ENCODE measurements at regions of chr12 and their contacts with region 1.

Region 1: DNA sequence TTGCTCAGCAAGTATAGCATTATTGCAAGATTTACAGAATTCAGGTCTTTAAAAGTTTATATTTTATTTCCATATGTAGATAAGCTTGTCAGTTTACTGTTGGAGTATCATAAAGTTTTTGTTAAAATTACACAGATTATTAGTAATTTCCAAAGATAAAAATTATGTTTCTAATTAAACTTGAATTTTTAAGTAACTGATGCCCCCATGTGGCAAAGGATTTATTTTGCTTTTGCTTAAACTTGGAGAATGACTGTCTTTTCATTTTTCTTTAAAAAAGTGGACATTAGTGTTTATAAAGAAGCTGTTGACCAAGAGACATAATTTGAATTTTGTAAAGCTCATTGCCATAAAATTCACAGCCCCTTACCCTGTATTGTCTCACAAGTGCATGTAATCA is 45.8 kb downstream of the ETNK1 start:
- DNase-seq: no peak
- ATAC-seq: no peak
- H3K4me3 Mint-ChIP-seq: no peak overlapping the region
- H3K27ac Mint-ChIP-seq: no peak overlapping the region
- H3K4me1 Mint-ChIP-seq: no peaks in the 10 kb centered on the region
- H3K27me3 Mint-ChIP-seq: no peaks in the 10 kb centered on the region
- CTCF ChIP-seq: no peak

Region 2: DNA sequence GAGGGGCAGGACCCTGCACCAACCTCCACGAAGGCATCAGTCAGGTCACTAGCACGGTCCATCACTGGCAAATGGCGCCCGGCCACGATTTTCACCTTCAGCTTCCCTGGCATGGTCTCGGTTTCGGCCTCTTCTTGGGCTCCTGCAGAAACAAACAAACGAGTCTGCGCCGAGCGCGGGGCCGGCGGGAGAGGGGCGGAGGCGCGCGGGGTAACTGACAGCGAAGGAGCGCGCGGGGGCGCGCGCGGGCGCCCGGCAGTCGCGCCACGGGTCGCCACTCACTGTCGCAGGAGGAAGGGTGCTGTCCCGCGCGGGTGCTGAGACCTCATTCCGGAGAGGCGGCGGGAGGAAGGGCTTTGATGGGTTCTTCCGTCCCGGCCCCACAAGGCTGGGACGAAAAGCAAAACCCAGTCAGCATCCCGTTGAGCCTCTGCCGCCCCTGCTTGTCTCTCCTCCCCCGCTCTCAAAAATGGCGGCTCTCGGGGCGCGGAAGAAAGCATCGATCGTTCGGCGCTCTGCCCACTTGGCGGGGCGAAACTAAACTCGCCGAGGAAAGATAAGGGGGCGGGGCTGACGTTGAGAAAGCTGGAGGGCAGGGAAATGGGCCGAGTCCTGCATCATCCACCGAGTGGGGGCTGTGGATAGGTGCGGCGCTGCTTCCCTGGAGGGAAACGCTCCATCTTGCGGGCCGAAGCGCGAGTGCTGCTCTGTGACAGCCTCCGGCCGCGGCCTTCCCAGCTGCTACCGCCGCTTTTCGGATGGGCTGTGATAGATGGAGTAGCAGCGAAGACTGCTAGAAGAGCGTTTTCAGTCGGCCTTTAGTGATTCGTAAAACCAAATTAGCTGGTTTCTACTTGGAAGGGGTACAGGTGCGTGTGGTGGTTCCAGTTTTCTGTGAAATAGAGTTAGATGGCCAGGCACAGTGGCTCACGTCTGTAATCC is 126.5 kb before region 1 on chr12 and contains the start of gene C2CD5:
- CTCF ChIA-PET with region 1: interaction called, 3 read pairs
- POLR2A ChIA-PET with region 1: interaction called, 3 read pairs
- intact Hi-C with region 1: loop called (anchors 10 kb)
- DNase-seq: peak; percentile 97
- ATAC-seq: peak; percentile 91
- H3K4me3 Mint-ChIP-seq: peak within 1 kb of the TSS; percentile 95
- H3K27ac Mint-ChIP-seq: peak within 1 kb of the TSS; percentile 94
- H3K4me1 Mint-ChIP-seq: peaks cover 30% of the 10 kb centered on the region
- H3K27me3 Mint-ChIP-seq: peaks cover 6% of the 10 kb centered on the region
- CTCF ChIP-seq: no peak
- total RNA-seq, gene C2CD5: 32.4 to 34.1 TPM

Region 3: GRCh38 chr12:22631863-22632463 is 38.8 kb before region 1 on chr12:
- CTCF ChIA-PET with region 1: no interaction called
- POLR2A ChIA-PET with region 1: no interaction called
- intact Hi-C with region 1: no loop called
- DNase-seq: no peak
- ATAC-seq: peak; percentile 34
- H3K4me3 Mint-ChIP-seq: no peak overlapping the region
- H3K27ac Mint-ChIP-seq: no peak overlapping the region
- H3K4me1 Mint-ChIP-seq: peaks cover 67% of the 10 kb centered on the region
- H3K27me3 Mint-ChIP-seq: no peaks in the 10 kb centered on the region
- CTCF ChIP-seq: peak; percentile 72

Region 4: DNA sequence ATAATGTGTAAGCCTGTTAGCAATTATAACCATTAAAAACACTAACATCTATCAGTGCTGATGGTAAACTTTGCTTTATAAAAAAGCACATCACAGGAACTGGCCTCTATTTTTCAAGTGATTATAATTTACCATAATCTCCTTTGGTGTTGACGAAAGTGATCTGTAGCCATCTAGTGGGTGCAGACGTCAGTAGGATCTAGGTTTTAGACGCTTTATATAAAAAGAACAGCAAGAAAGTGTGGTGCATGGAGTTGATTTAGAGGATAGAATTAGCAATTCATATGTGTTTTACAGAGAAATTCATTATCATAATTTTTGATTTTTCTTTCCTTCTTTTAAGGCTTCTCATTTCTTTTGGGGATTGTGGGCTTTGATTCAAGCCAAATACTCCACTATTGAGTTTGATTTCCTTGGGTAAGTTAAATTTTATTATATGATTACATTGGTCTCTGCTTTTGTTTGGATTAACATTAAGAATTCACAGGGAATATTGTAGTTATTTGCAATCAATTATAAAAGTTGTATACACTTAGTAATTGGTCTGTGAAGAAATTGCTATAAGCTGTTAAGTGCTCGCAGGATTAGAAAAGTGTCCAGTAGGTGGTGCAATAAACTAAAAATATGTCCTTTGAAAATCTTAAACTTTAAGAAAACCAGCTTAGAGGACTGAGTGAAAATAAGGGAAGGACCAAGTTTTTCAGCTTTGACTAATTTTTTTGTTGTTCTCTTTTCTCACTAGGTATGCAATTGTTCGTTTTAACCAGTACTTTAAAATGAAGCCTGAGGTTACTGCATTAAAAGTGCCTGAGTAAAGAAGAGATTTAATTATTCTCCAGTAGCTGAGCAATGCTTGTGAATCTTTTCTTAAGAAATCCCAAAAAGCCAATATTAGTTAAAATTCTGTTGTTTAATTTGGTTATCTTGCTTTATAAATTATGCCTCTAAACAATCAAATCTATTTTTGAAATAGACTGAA is 13.7 kb after region 1 on chr12:
- CTCF ChIA-PET with region 1: interaction called, 10 read pairs
- POLR2A ChIA-PET with region 1: no interaction called
- intact Hi-C with region 1: no loop called
- DNase-seq: no peak
- ATAC-seq: no peak
- H3K4me3 Mint-ChIP-seq: no peak overlapping the region
- H3K27ac Mint-ChIP-seq: no peak overlapping the region
- H3K4me1 Mint-ChIP-seq: peaks cover 15% of the 10 kb centered on the region
- H3K27me3 Mint-ChIP-seq: no peaks in the 10 kb centered on the region
- CTCF ChIP-seq: peak; percentile 67

Region 5: GRCh38 chr12:22803725-22804124 is 133.0 kb after region 1 on chr12:
- CTCF ChIA-PET with region 1: no interaction called
- POLR2A ChIA-PET with region 1: no interaction called
- intact Hi-C with region 1: no loop called
- DNase-seq: no peak
- ATAC-seq: no peak
- H3K4me3 Mint-ChIP-seq: no peak overlapping the region
- H3K27ac Mint-ChIP-seq: no peak overlapping the region
- H3K4me1 Mint-ChIP-seq: no peaks in the 10 kb centered on the region
- H3K27me3 Mint-ChIP-seq: peaks cover 3% of the 10 kb centered on the region
- CTCF ChIP-seq: no peak

Measured in activated CD8-positive, alpha-beta T cell treated with anti-CD3 and anti-CD28 coated beads for 36 hours (primary cell).